Esophagus squamous epithelium (tissue), 5 donors: ENCODE measurements at regions of chr11 and their contacts with region 1.

Region 1: DNA sequence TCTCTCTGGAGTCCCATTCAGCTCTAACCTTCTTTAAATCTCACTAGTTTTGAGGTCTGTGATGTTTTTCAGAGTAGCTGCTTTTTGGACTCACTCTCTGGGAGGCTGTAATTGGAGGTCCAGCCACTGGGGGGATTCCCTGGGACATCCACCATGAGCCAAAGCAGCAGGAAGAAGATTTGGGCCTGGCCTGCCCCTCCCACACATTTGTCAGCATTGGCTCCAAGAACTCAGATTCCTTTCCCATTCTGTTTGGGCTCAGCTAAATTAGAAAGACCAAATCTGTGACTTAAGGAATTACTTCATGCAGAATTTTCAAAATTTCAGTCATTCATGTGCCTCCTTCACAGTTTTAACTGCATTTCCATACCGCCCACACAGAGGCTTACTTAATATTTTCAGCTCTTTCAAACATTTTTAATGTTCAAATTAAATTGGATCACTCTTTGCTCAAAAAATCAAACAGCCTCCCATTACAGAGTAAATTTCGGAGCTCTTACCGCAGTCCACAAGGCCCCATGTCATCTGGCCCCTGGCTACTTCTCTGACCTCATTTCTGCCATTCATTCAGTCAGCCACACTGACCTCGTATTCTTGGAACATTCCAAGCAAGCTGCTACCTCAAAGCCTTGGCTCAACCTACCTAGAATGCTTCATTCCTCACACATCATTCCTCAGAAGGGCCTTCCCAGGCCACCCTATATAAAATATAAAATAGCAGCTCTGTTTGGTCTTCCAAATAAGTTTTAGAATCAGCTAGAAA is 54.5 kb upstream of the RRAS2 start:
- DNase-seq: no peak
- H3K4me3 ChIP-seq: no peak overlapping the region
- H3K27ac ChIP-seq: peak overlapping the region in 3 of 4 donors; percentile 22 to 42 (median 40)
- H3K4me1 ChIP-seq: peaks cover 0 to 40% (median 17%) of the 10 kb centered on the region in 3 donors
- H3K27me3 ChIP-seq: no peaks in the 10 kb centered on the region
- CTCF ChIP-seq: peak in 2 of 6 experiments; percentile 13 to 27
- POLR2A ChIP-seq: no peak

Region 2: GRCh38 chr11:14300661-14301304 is 112.7 kb before region 1 on chr11:
- intact Hi-C with region 1: loop called (anchors 10 kb)
- DNase-seq: no peak
- H3K4me3 ChIP-seq: no peak overlapping the region
- H3K27ac ChIP-seq: no peak overlapping the region
- H3K4me1 ChIP-seq: peaks cover 6 to 20% (median 12%) of the 10 kb centered on the region in 3 donors
- H3K27me3 ChIP-seq: no peaks in the 10 kb centered on the region
- CTCF ChIP-seq: peak; percentile 54 to 87 (median 68)
- POLR2A ChIP-seq: no peak